Transverse colon (tissue), 4 donors: ENCODE measurements at regions of chr1 and their contacts with region 1.

Region 1: GRCh38 chr1:115980998-115981993 is 5.0 kb downstream of the SLC22A15 start:
- DNase-seq: no peak
- H3K4me3 ChIP-seq: no peak overlapping the region
- H3K27ac ChIP-seq: no peak overlapping the region
- H3K4me1 ChIP-seq: peaks cover 0 to 10% (median 6%) of the 10 kb centered on the region in 4 donors
- H3K27me3 ChIP-seq: no peaks in the 10 kb centered on the region
- CTCF ChIP-seq: peak; percentile 52 to 64 (median 63)
- EP300 ChIP-seq: no peak
- POLR2A ChIP-seq: no peak

Region 2: GRCh38 chr1:115793162-115793561 is 188.1 kb before region 1 on chr1:
- in situ Hi-C with region 1: no loop called
- intact Hi-C with region 1: loop called (anchors 10 kb)
- DNase-seq: no peak
- H3K4me3 ChIP-seq: no peak overlapping the region
- H3K27ac ChIP-seq: no peak overlapping the region
- H3K4me1 ChIP-seq: no peaks in the 10 kb centered on the region
- H3K27me3 ChIP-seq: peaks cover 11% of the 10 kb centered on the region
- CTCF ChIP-seq: no peak
- EP300 ChIP-seq: no peak
- POLR2A ChIP-seq: no peak

Region 3: GRCh38 chr1:115807723-115808122 is 173.6 kb before region 1 on chr1:
- in situ Hi-C with region 1: loop called (anchors 5 to 10 kb)
- intact Hi-C with region 1: no loop called
- DNase-seq: peak; percentile 47
- H3K4me3 ChIP-seq: no peak overlapping the region
- H3K27ac ChIP-seq: no peak overlapping the region
- H3K4me1 ChIP-seq: peaks cover 0 to 17% (median 8%) of the 10 kb centered on the region in 4 donors
- H3K27me3 ChIP-seq: no peaks in the 10 kb centered on the region
- CTCF ChIP-seq: peak; percentile 55 to 72 (median 67)
- EP300 ChIP-seq: no peak
- POLR2A ChIP-seq: no peak

Region 4: DNA sequence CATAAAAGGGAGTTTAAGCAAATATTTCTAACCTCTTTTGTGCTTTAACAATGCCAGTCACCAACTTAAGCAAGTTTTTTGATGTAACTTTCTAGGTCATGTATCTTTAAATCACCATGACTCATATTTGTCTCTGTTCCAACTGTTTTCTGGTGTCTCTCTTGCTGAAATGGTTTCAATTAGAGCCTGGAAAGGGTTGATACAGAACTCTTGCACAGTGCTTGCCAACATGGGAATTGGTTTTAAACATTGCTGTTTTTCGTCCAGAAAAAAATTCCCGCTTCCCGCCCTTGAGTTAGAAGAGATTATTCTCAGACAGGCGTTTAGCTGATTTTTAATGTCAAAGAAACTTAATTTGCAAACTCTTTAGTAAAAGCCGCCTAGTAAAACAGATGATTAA is 51.4 kb before region 1 on chr1:
- in situ Hi-C with region 1: no loop called
- intact Hi-C with region 1: no loop called
- DNase-seq: no peak
- H3K4me3 ChIP-seq: no peak overlapping the region
- H3K27ac ChIP-seq: no peak overlapping the region
- H3K4me1 ChIP-seq: no peaks in the 10 kb centered on the region
- H3K27me3 ChIP-seq: no peaks in the 10 kb centered on the region
- CTCF ChIP-seq: no peak
- EP300 ChIP-seq: no peak
- POLR2A ChIP-seq: no peak

Region 5: GRCh38 chr1:116033322-116033721 is 52.0 kb after region 1 on chr1:
- in situ Hi-C with region 1: no loop called
- intact Hi-C with region 1: no loop called
- DNase-seq: no peak
- H3K4me3 ChIP-seq: no peak overlapping the region
- H3K27ac ChIP-seq: no peak overlapping the region
- H3K4me1 ChIP-seq: peaks cover 0 to 4% (median 0%) of the 10 kb centered on the region in 4 donors
- H3K27me3 ChIP-seq: no peaks in the 10 kb centered on the region
- CTCF ChIP-seq: no peak
- EP300 ChIP-seq: no peak
- POLR2A ChIP-seq: no peak